ENCODE measurements at regions of chr5 and their contacts with region 1.

Region 1: GRCh38 chr5:31186672-31187267 is 6.7 kb upstream of the CDH6 start:
- DNase-seq: peak; percentile 37
- H3K4me3 ChIP-seq: no peak overlapping the region
- H3K27ac ChIP-seq: no peak overlapping the region
- H3K4me1 ChIP-seq: no peaks in the 10 kb centered on the region
- H3K27me3 ChIP-seq: peaks cover 6% of the 10 kb centered on the region
- CTCF ChIP-seq: peak; percentile 84
- EP300 ChIP-seq: no peak
- RAD21 ChIP-seq: peak; percentile 50

Region 2: DNA sequence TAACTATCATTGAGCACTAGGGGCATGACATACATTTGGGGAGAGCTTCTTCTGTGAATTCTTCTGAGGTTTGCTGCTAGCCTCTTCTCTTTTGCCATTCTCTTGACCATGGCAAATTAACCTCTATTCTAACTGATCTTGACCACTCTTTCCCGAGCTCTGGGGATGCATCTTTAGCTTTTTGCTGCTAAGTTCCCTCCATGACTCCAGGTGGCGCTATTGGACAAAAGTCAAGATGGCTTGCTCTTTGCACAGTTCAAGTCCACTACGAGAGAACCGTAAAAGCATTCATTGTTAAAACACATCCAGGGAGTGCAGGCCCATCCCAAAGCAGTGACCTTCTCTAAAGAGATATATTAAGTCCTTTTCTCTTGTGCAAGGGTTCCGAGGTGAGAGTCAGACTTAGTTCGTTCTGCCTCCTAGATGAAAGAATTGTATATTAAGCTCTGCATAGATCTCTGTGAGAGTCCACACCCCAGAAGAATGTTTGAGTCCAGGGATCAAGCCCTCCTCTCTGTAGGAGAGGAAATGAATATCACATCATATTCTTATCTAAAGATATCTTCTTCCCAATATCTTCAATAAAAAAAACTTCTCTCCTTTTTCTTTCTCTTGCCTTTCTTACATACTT is 1146.2 kb before region 1 on chr5:
- CTCF ChIA-PET with region 1: interaction called, 17 read pairs
- POLR2A ChIA-PET with region 1: no interaction called
- DNase-seq: peak; percentile 50
- H3K4me3 ChIP-seq: no peak overlapping the region; a peak in 1 of 4 replicates
- H3K27ac ChIP-seq: no peak overlapping the region
- H3K4me1 ChIP-seq: peaks cover 0 to 4% of the 10 kb centered on the region in 2 experiments; a peak in 1 of 4 replicates
- H3K27me3 ChIP-seq: no peaks in the 10 kb centered on the region
- CTCF ChIP-seq: peak; percentile 81
- EP300 ChIP-seq: no peak
- RAD21 ChIP-seq: peak; percentile 82

Region 3: GRCh38 chr5:31021181-31021624 is 165.6 kb before region 1 on chr5:
- CTCF ChIA-PET with region 1: no interaction called
- POLR2A ChIA-PET with region 1: no interaction called
- DNase-seq: no peak
- H3K4me3 ChIP-seq: no peak overlapping the region
- H3K27ac ChIP-seq: no peak overlapping the region
- H3K4me1 ChIP-seq: no peaks in the 10 kb centered on the region; a peak in 1 of 4 replicates
- H3K27me3 ChIP-seq: no peaks in the 10 kb centered on the region
- CTCF ChIP-seq: no peak
- EP300 ChIP-seq: no peak
- RAD21 ChIP-seq: no peak

Region 4: DNA sequence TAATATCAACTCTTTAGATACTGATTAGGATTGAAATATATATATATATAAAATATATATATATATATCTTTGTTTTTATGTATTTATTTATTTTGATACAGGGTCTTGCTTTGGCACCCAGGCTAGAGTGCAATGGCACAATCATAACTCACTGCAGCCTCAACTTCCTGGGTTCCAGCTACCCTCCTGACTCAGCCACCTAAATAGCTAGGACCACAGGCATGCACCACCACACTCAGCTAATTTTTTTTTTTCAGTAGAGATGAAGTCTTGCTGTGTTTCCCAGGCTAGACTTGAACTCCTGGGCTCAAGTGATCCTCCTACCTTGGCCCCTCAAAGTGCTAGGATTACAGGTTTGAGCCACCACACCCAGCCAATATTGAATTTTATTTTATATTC is 13.9 kb before region 1 on chr5:
- CTCF ChIA-PET with region 1: interaction called, 19 read pairs
- POLR2A ChIA-PET with region 1: no interaction called
- DNase-seq: no peak
- H3K4me3 ChIP-seq: no peak overlapping the region
- H3K27ac ChIP-seq: no peak overlapping the region
- H3K4me1 ChIP-seq: no peaks in the 10 kb centered on the region
- H3K27me3 ChIP-seq: no peaks in the 10 kb centered on the region; the same call in 1 of the 2 replicates
- CTCF ChIP-seq: no peak
- EP300 ChIP-seq: no peak
- RAD21 ChIP-seq: no peak